ENCODE measurements at regions of chr18 and their contacts with region 1.

Region 1: DNA sequence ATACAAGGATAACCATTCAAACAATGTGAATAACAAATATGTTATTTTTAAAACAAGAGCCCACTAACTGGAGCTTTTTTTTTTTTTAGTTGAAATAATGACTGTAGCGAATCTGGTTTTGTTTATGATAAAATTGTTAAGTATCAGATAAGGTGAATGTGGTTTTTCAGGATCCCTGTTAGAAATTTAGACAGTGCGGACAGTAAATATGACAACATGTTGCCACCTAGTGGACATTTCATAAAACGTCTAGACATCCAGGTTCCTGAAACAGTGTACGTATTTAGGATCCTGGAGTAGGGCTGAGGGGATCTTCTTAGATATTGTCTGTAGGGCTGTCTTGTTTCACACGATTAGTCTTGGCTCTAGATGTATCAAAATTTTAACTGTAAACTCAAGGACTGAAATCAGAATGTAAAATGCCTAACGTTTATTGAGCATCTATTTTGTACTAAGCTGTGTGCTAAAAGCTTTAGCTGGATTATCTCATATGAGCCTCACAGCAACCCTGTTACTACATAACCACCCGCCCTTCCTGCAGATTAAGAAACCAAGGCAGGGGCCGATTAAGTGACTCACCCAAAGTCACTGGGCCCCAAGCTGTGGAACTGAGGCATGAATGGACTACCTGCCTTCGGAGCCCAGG is 23.9 kb upstream of the CCDC68 start:
- DNase-seq: no peak
- H3K4me3 ChIP-seq: no peak overlapping the region
- H3K27ac ChIP-seq: no peak overlapping the region
- H3K4me1 ChIP-seq: no peaks in the 10 kb centered on the region
- H3K27me3 ChIP-seq: no peaks in the 10 kb centered on the region
- CTCF ChIP-seq: peak; percentile 54 to 64 (median 59)
- EP300 ChIP-seq: no peak
- POLR2A ChIP-seq: no peak

Region 2: GRCh38 chr18:54392543-54393023 is 590.6 kb before region 1 on chr18:
- intact Hi-C with region 1: loop called (anchors 10 kb)
- DNase-seq: no peak
- H3K4me3 ChIP-seq: no peak overlapping the region
- H3K27ac ChIP-seq: no peak overlapping the region
- H3K4me1 ChIP-seq: no peaks in the 10 kb centered on the region
- H3K27me3 ChIP-seq: no peaks in the 10 kb centered on the region
- CTCF ChIP-seq: peak; percentile 50 to 75 (median 62)
- EP300 ChIP-seq: no peak
- POLR2A ChIP-seq: no peak

Region 3: GRCh38 chr18:54444319-54444914 is 538.7 kb before region 1 on chr18:
- intact Hi-C with region 1: loop called (anchors 5 kb)
- DNase-seq: no peak
- H3K4me3 ChIP-seq: no peak overlapping the region
- H3K27ac ChIP-seq: no peak overlapping the region
- H3K4me1 ChIP-seq: no peaks in the 10 kb centered on the region
- H3K27me3 ChIP-seq: peaks cover 0 to 14% (median 0%) of the 10 kb centered on the region in 4 donors
- CTCF ChIP-seq: peak in 2 of 3 experiments; percentile 15 to 47
- EP300 ChIP-seq: no peak
- POLR2A ChIP-seq: no peak

Region 4: GRCh38 chr18:54561706-54562267 is 421.4 kb before region 1 on chr18:
- intact Hi-C with region 1: loop called (anchors 5 kb)
- DNase-seq: no peak
- H3K4me3 ChIP-seq: no peak overlapping the region
- H3K27ac ChIP-seq: no peak overlapping the region
- H3K4me1 ChIP-seq: no peaks in the 10 kb centered on the region
- H3K27me3 ChIP-seq: no peaks in the 10 kb centered on the region
- CTCF ChIP-seq: no peak
- EP300 ChIP-seq: no peak
- POLR2A ChIP-seq: no peak

Region 5: GRCh38 chr18:54679318-54680149 is 303.6 kb before region 1 on chr18:
- intact Hi-C with region 1: loop called (anchors 5 kb)
- DNase-seq: no peak
- H3K4me3 ChIP-seq: no peak overlapping the region
- H3K27ac ChIP-seq: no peak overlapping the region
- H3K4me1 ChIP-seq: no peaks in the 10 kb centered on the region
- H3K27me3 ChIP-seq: no peaks in the 10 kb centered on the region
- CTCF ChIP-seq: peak in 1 of 3 experiments; percentile 31
- EP300 ChIP-seq: no peak
- POLR2A ChIP-seq: no peak

Region 6: GRCh38 chr18:54916507-54916906 is 66.7 kb before region 1 on chr18:
- intact Hi-C with region 1: no loop called
- DNase-seq: no peak
- H3K4me3 ChIP-seq: no peak overlapping the region
- H3K27ac ChIP-seq: no peak overlapping the region
- H3K4me1 ChIP-seq: no peaks in the 10 kb centered on the region
- H3K27me3 ChIP-seq: no peaks in the 10 kb centered on the region
- CTCF ChIP-seq: no peak
- EP300 ChIP-seq: no peak
- POLR2A ChIP-seq: no peak